ENCODE measurements at regions of chr16 and their contacts with region 1.

Region 1: DNA sequence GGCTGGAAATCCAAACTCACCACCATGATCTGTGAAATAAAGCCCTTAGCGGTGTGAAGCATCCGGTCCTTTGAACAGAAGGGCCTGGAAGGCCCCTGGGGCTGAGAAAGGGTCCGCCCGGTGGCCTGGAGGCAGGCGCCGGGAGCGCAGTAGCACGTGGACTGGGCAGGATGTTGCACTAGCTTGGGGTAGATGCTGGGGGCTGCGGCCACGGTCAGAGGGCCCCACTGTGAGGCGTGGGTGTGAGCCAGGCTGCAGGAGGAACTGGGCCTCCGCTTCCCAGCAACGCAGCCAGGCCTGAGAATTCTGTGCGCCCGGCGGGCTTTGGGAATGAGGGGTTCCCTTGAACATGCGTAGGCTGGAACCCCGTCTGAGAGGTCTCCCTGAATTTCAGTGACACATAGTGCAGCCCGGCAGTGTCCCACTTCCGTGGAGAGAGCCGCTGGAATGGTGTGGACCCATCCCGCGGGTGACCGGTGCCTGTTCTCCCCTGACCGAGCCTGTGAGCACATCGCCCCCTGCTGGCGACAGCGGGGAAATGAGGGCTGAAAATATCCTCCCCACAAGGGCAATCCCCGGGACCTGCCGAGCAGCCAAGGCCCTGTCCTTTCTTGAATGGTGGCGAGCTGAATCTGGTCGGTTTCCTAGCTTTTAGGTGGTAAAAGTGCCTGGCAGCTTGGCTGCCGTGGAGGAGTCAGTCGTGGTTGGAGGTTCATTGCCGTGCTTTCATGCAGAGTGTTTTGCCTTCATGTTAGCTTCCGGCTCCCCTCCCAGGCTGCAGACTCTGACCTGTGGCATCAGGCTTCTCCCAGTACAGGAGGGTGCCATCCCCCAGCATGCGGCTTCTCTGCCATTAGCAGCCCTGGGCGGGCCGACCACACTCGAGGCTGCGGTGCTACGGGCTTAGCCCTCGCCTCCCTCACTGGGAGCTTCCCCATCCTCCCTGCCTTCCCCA is 43.8 kb downstream of the DNAJA2 start:
- DNase-seq: peak; percentile 89
- CTCF ChIP-seq: peak; percentile 91

Region 2: GRCh38 chr16:46862555-46863447 is 66.9 kb before region 1 on chr16:
- CTCF ChIA-PET with region 1: interaction called, 10 read pairs
- POLR2A ChIA-PET with region 1: no interaction called
- DNase-seq: no peak
- CTCF ChIP-seq: no peak

Region 3: DNA sequence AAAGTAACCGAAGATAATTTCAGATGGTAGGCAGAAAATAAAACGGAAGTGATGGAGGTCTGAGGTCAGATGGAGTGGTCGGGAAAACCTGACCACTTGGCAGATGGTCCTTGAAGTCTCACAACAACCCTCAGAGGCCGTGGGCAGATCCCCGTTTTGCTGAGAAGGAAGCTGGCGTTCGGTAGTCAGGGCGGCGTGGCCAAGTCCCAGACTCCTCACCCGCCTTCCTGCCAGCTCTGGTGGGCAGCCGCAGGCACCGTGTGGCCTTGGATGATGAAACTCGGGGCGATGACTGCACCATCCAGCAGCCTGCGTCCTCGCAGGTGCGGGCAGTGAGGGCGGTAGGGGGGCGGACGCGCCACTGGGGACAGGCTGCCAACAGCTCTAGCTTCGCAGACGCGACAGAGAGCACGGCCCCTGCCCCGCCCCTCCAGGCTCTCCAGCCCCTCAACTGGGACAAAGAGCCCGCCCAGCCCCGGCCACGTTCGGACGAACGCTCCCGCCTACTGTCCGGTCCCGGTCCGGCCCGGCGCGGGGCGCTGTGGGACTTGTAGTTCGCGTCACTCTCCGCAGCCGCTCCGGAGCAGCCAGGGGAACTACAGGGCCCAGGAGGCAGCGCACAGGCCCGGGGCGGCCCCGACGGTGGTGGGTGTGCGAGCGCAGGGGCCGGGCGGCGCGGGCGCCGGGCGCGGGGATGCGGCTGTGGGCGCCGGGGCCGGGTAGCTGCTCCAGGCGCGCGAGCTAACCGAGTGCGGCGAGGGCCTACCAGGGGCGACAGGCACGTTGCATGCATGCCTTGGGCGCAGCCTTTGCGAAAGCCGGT is 45.8 kb before region 1 on chr16 and contains the start of gene GPT2:
- CTCF ChIA-PET with region 1: interaction called, 16 read pairs
- POLR2A ChIA-PET with region 1: interaction called, 3 read pairs
- DNase-seq: peak; percentile 92
- CTCF ChIP-seq: no peak

Region 4: DNA sequence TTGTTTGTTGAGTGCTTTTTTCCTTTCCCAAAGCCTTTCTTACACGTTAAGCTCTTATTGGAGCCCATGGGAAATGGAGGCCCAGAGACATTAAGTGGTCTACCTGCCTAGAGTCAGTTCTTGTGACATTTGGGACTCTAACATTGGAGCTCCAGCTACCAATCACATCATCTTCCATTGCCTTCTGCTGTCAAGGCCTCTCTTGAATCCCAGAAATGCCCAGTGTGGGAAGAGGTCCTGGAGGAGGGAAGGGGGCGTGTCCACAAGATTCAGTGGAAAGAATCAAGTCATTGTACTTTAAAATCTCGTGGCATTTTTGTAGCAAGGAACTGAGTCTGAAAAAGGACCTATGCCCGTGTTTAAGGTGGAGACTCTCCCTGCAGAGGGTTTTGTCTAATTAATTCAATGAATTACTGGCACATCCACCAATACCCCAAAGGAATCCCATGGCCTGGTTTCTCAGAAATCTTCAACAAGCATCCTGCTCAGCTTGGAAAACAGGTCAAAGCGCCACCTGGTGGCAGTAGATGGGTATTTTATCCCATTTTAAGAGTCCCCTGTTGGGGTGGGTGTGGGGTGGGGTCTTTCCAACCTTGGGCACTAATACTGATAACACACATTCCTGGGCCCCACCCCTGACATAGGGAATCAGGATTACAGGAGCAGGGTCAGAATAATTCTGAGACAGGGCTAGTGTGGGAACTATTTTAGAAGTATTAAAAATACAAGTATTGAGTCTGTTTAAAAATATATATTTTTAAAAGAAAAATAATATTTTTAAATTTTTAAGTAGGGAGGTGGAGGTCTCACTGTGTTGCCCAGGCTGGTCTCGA is 20.9 kb before region 1 on chr16:
- CTCF ChIA-PET with region 1: interaction called, 38 read pairs
- POLR2A ChIA-PET with region 1: no interaction called
- DNase-seq: peak; percentile 66
- CTCF ChIP-seq: peak; percentile 63

Region 5: GRCh38 chr16:46918861-46919792 is 10.5 kb before region 1 on chr16:
- CTCF ChIA-PET with region 1: interaction called, 64 read pairs
- POLR2A ChIA-PET with region 1: no interaction called
- DNase-seq: peak; percentile 86
- CTCF ChIP-seq: peak; percentile 49

Region 6: GRCh38 chr16:47008174-47008573 is 78.5 kb after region 1 on chr16:
- CTCF ChIA-PET with region 1: no interaction called
- POLR2A ChIA-PET with region 1: no interaction called
- DNase-seq: no peak
- CTCF ChIP-seq: no peak

Region 7: DNA sequence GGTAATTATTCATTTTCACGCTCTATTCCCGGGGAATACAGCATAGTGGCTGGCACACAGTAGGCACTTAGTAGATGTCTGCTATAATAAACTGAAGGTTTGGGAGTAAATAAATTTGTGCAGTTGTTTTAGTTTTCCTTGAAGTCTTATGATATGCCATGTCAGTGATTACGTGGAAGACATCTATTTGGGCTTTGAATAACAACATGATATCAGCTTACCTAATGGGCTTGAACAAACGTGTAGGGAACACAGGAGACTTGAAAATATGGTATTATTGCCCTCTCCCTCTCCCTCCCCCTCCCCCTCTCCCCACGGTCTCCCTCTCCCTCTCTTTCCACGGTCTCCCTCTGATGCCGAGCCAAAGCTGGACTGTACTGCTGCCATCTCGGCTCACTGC is 250.4 kb after region 1 on chr16:
- CTCF ChIA-PET with region 1: no interaction called
- POLR2A ChIA-PET with region 1: no interaction called
- DNase-seq: no peak
- CTCF ChIP-seq: no peak